ENCODE measurements at regions of chr19 and their contacts with region 1.

Region 1: DNA sequence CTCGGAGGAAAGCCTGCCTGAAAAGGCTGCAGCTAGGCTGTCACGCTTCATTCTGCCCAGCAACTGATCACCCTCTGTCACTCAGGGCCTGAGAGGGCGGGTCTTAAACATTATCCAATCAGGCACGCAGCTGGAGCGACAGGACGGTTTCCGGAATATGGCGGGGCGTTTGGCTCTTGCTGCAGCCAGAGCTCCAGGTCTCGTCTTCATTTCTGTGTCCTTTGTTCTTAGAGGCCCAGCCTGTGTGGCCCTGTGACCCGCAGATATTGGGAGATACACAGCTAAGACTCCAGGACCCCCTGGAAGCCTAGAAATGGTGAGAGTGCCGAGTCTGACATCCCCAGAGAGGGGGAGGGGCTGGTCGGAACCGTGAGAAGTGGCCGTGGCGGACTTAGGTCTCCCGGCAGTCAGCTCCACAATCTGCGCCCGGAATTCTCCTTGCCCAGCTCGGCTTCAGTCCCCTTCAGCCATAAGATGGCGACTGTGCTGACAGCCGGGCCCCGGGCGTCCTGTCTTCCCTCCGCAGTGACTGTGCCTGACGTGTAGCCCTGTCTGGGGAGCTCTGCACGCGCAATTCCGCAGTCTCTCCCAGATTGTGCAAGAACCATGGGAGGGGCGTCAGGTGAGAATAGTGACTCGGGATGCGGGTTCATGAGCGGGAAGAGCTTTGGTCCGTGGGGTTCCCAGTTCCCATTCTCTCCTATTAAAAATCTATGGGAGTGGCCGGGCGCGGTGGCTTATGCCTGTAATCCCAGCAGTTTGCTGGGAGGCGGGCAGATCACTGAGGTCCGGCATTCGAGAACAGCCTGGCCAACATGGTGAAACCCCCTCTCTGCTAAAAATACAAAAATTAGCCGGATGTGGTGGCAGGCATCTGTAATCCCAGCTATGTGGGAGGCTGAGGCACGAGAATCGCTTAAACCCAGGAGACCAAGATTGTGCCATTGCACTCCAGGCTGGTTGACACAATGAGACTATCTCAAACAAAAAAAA is at the start of gene ZNF429:
- DNase-seq: peak; percentile 78 to 95 (median 87)
- H3K4me3 ChIP-seq: peak within 1 kb of the TSS; percentile 100
- H3K4me3 Mint-ChIP-seq: peak within 1 kb of the TSS; percentile 99 to 100 (median 100)
- H3K27ac ChIP-seq: peak within 1 kb of the TSS; percentile 100
- H3K27ac Mint-ChIP-seq: peak within 1 kb of the TSS; percentile 98 to 100 (median 100)
- H3K4me1 ChIP-seq: peaks cover 18% of the 10 kb centered on the region
- H3K4me1 Mint-ChIP-seq: peaks cover 47 to 58% (median 58%) of the 10 kb centered on the region in 3 donors
- H3K27me3 ChIP-seq: no peaks in the 10 kb centered on the region
- H3K27me3 Mint-ChIP-seq: peaks cover 0 to 1% of the 10 kb centered on the region in 2 donors
- total RNA-seq, gene ZNF429: 8.5 to 9.0 TPM

Region 2: DNA sequence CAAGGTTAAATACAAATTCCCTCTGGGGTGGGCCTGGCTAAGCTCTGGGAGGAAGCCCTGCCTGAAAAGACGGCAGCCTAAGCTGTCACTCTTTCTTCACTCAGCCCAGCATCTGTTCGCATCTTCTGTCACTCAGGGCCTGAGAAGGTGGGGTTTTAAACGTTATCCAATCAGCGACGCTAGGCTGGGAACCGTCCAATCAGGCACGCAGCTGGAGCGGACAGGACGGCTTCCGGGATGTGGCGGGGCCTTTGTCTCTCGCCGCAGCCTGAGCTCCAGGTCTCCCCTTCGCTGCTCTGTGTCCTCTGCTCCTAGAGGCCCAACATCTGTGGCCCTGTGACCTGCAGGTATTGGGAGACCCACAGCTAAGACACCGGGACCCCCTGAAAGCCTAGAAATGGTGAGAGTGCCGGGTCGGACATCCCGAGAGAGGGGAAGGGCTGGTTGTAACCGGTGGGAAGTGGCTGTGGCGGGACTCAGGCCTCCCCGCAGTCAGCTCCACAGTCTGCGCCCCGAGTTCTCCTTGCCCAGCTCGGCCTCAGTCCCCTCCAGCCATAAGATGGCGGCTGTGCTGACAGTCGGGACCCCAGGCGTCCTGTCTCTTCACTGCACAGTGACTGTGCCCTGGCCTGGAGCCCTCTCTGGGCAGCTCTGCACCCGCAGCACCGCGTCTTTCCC is 363.8 kb before region 1 on chr19 and contains the start of gene ZNF431:
- CTCF ChIA-PET with region 1: interaction called, 6 read pairs
- POLR2A ChIA-PET with region 1: interaction called, 15 read pairs
- DNase-seq: peak; percentile 81 to 93 (median 89)
- H3K4me3 ChIP-seq: peak within 1 kb of the TSS; percentile 84
- H3K4me3 Mint-ChIP-seq: peak within 1 kb of the TSS; percentile 97 to 99 (median 97)
- H3K27ac ChIP-seq: peak within 1 kb of the TSS; percentile 84
- H3K27ac Mint-ChIP-seq: peak within 1 kb of the TSS; percentile 82 to 100 (median 97)
- H3K4me1 ChIP-seq: peaks cover 8% of the 10 kb centered on the region
- H3K4me1 Mint-ChIP-seq: peaks cover 33 to 58% (median 50%) of the 10 kb centered on the region in 3 donors
- H3K27me3 ChIP-seq: no peaks in the 10 kb centered on the region
- H3K27me3 Mint-ChIP-seq: no peaks in the 10 kb centered on the region
- total RNA-seq, gene ZNF431: 14.7 to 17.6 TPM

Region 3: GRCh38 chr19:21328885-21329605 is 176.7 kb before region 1 on chr19 and contains the start of gene ZNF708:
- CTCF ChIA-PET with region 1: interaction called, 4 read pairs
- POLR2A ChIA-PET with region 1: interaction called, 22 read pairs
- DNase-seq: peak; percentile 60 to 82 (median 75)
- H3K4me3 ChIP-seq: peak within 1 kb of the TSS; percentile 88
- H3K4me3 Mint-ChIP-seq: peak within 1 kb of the TSS; percentile 95 to 99 (median 98)
- H3K27ac ChIP-seq: peak within 1 kb of the TSS; percentile 96
- H3K27ac Mint-ChIP-seq: peak within 1 kb of the TSS; percentile 97 to 99 (median 98)
- H3K4me1 ChIP-seq: peaks cover 15% of the 10 kb centered on the region
- H3K4me1 Mint-ChIP-seq: peaks cover 44 to 55% (median 50%) of the 10 kb centered on the region in 3 donors
- H3K27me3 ChIP-seq: no peaks in the 10 kb centered on the region
- H3K27me3 Mint-ChIP-seq: no peaks in the 10 kb centered on the region
- total RNA-seq, gene ZNF708: 11.5 to 13.3 TPM

Region 4: DNA sequence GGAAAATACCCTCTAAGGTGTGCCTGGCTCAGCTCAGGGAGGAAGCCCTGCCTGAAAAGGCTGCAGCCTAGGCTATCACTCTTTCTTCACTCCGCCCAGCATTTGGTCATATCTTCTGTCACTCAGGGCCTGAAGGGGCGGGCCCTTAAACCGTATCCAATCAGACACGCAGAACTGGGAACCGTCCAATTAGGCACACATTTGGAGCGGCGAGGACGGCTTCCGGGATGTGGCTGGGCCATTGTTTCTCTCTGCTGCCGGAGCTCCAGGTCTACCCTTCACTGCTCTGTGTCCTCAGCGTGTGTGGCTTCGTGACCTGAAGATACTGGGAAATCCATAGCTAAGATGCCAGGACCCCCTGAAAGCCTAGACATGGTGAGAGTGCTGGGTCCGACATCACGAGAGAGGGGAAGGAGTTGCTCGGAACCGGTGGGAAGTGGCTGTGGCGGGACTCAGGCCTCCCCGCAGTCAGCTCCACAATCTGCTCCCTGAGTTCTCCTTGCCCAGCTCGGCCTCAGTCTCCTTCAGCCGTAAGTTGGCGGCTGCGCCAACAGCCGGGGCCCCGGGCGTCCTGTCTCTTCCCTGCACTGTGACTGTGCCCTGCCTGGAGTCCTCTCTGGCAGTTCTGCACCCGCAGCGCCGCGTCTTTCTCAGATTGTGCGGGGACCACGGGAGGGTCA is 108.7 kb before region 1 on chr19 and contains the start of gene ZNF493:
- CTCF ChIA-PET with region 1: no interaction called
- POLR2A ChIA-PET with region 1: interaction called, 18 read pairs
- DNase-seq: peak; percentile 80 to 93 (median 89)
- H3K4me3 ChIP-seq: peak within 1 kb of the TSS; percentile 78
- H3K4me3 Mint-ChIP-seq: peak within 1 kb of the TSS; percentile 94 to 99 (median 97)
- H3K27ac ChIP-seq: peak within 1 kb of the TSS; percentile 75
- H3K27ac Mint-ChIP-seq: peak within 1 kb of the TSS; percentile 62 to 97 (median 92)
- H3K4me1 ChIP-seq: peaks cover 19% of the 10 kb centered on the region
- H3K4me1 Mint-ChIP-seq: peaks cover 36 to 48% (median 46%) of the 10 kb centered on the region in 3 donors
- H3K27me3 ChIP-seq: no peaks in the 10 kb centered on the region
- H3K27me3 Mint-ChIP-seq: no peaks in the 10 kb centered on the region
- total RNA-seq, gene ZNF493: 13.3 to 15.1 TPM

Region 5: DNA sequence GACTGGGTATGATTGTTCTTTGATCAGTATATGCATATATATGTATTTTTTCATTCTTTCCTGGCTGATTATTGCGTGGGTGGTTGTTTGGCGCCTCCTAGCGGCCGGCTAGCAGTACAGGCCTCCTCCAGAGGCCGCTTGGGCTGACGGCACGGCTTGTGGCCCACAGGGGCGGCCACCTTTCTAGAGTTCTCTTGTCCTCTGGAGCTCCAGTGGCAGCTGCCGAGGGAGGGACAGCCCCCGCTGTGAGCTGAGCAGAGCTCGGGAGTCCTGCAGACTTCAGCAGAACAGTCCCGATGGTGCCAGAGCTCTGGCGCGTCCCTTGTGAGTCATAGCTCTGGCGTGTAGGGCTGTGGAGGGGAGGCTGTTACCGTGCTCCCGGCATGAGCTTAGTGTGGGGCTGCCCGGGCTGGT is 22.9 kb before region 1 on chr19:
- CTCF ChIA-PET with region 1: interaction called, 15 read pairs
- POLR2A ChIA-PET with region 1: interaction called, 7 read pairs
- DNase-seq: peak; percentile 21 to 75 (median 56)
- H3K4me3 ChIP-seq: no peak overlapping the region
- H3K4me3 Mint-ChIP-seq: no peak overlapping the region
- H3K27ac ChIP-seq: no peak overlapping the region
- H3K27ac Mint-ChIP-seq: peak overlapping the region in 1 of 8 donors; percentile 11
- H3K4me1 ChIP-seq: no peaks in the 10 kb centered on the region
- H3K4me1 Mint-ChIP-seq: peaks cover 0 to 1% (median 0%) of the 10 kb centered on the region in 3 donors
- H3K27me3 ChIP-seq: no peaks in the 10 kb centered on the region
- H3K27me3 Mint-ChIP-seq: peaks cover 0 to 2% of the 10 kb centered on the region in 2 donors

Region 6: GRCh38 chr19:21519488-21519887 is 13.7 kb after region 1 on chr19:
- CTCF ChIA-PET with region 1: no interaction called
- POLR2A ChIA-PET with region 1: no interaction called
- DNase-seq: no peak
- H3K4me3 ChIP-seq: peak overlapping the region; percentile 29
- H3K4me3 Mint-ChIP-seq: no peak overlapping the region
- H3K27ac ChIP-seq: no peak overlapping the region
- H3K27ac Mint-ChIP-seq: no peak overlapping the region
- H3K4me1 ChIP-seq: no peaks in the 10 kb centered on the region
- H3K4me1 Mint-ChIP-seq: peaks cover 20 to 23% (median 22%) of the 10 kb centered on the region in 3 donors
- H3K27me3 ChIP-seq: no peaks in the 10 kb centered on the region
- H3K27me3 Mint-ChIP-seq: no peaks in the 10 kb centered on the region

Region 7: GRCh38 chr19:21568816-21569493 is 63.2 kb after region 1 on chr19:
- CTCF ChIA-PET with region 1: interaction called, 7 read pairs
- POLR2A ChIA-PET with region 1: interaction called, 17 read pairs
- DNase-seq: peak; percentile 54 to 89 (median 80)
- H3K4me3 ChIP-seq: peak overlapping the region; percentile 20
- H3K4me3 Mint-ChIP-seq: peak overlapping the region; percentile 91 to 98 (median 93)
- H3K27ac ChIP-seq: peak overlapping the region; percentile 41
- H3K27ac Mint-ChIP-seq: peak overlapping the region; percentile 87 to 99 (median 96)
- H3K4me1 ChIP-seq: no peaks in the 10 kb centered on the region
- H3K4me1 Mint-ChIP-seq: peaks cover 17 to 28% (median 24%) of the 10 kb centered on the region in 3 donors
- H3K27me3 ChIP-seq: no peaks in the 10 kb centered on the region
- H3K27me3 Mint-ChIP-seq: peaks cover 0 to 6% of the 10 kb centered on the region in 2 donors